Calu3 (cell line): ENCODE measurements at regions of chr5 and their contacts with region 1.

Region 1: GRCh38 chr5:134948911-134949310 is 18.8 kb upstream of the CATSPER3 start:
- DNase-seq: no peak
- H3K4me3 Mint-ChIP-seq: no peak overlapping the region
- H3K27ac Mint-ChIP-seq: no peak overlapping the region
- H3K4me1 Mint-ChIP-seq: no peaks in the 10 kb centered on the region
- H3K27me3 Mint-ChIP-seq: no peaks in the 10 kb centered on the region
- CTCF ChIP-seq: no peak

Region 2: DNA sequence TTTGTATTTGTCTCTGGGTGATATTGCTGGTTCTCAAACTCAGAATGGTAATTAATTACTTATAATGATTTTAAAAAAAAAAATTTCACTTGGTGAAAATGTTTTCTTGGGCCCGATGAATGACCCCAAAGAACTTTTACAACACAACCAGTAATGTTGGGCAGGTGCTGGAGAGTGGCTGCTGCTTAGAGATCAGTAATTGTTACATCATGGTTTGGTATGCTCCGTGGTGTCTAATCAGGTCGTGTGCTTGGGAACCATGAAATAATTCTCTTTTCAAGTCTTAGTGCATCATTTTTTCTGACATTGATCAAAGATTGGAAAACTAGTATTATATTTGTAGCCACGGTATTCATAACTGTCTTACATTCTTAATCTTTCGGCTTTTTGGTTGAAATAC is 14.7 kb before region 1 on chr5:
- CTCF ChIA-PET with region 1: interaction called, 11 read pairs
- intact Hi-C with region 1: no loop called
- DNase-seq: no peak
- H3K4me3 Mint-ChIP-seq: no peak overlapping the region
- H3K27ac Mint-ChIP-seq: no peak overlapping the region
- H3K4me1 Mint-ChIP-seq: no peaks in the 10 kb centered on the region
- H3K27me3 Mint-ChIP-seq: no peaks in the 10 kb centered on the region
- CTCF ChIP-seq: no peak